ENCODE measurements at regions of chr10 and their contacts with region 1.

Region 1: GRCh38 chr10:102835007-102835482 is 2.2 kb downstream of the CYP17A1 start:
- DNase-seq: peak; percentile 55 to 69
- ATAC-seq: peak; percentile 88 to 90
- H3K4me3 ChIP-seq: no peak overlapping the region
- H3K27ac ChIP-seq: no peak overlapping the region
- H3K4me1 ChIP-seq: peaks cover 4 to 5% of the 10 kb centered on the region in 2 donors
- H3K27me3 ChIP-seq: no peaks in the 10 kb centered on the region
- CTCF ChIP-seq: peak; percentile 72 to 90 (median 82)
- POLR2A ChIP-seq: no peak

Region 2: DNA sequence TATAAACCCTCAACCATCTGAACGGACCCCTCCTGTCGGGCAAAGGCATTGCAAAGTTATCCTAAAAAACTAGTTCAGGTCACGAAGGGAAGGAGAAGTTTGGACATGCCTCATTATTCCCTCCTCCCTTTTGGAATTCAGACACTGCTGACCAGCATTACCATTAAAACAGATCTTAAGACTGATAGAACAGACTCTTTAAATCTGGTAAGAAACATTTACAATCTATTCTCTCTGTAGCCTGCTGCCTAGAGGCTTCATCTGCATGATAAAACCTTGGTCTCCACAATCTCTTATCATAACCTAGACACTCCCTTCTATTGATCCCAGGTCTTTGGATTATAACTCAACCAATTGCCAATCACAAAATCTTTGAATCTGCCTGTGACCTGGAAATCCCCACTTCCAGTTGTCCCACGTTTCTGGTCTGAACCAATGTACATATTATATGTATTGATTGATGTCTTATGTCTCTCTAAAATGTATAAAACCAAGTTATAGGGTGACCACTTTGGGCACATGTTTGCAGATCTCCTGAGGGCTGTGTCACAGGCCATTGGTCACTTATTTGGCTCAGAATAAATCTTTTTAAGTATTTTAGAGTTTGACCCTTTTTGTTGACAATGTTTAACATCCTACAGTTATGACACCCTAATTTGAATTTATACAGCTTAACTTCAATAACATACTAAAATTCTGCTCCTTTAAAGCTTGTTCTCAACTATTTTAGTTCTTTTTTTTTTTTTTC is 59.6 kb after region 1 on chr10:
- in situ Hi-C with region 1: loop called in 1 of 4 experiments (anchors 10 kb)
- intact Hi-C with region 1: no loop called
- DNase-seq: no peak
- ATAC-seq: no peak
- H3K4me3 ChIP-seq: no peak overlapping the region
- H3K27ac ChIP-seq: no peak overlapping the region
- H3K4me1 ChIP-seq: no peaks in the 10 kb centered on the region
- H3K27me3 ChIP-seq: no peaks in the 10 kb centered on the region
- CTCF ChIP-seq: no peak
- POLR2A ChIP-seq: no peak

Region 3: GRCh38 chr10:102904346-102904745 is 69.3 kb after region 1 on chr10:
- in situ Hi-C with region 1: loop called in 2 of 4 experiments (anchors 5 to 10 kb)
- intact Hi-C with region 1: loop called (anchors 2 kb)
- DNase-seq: no peak
- ATAC-seq: no peak
- H3K4me3 ChIP-seq: no peak overlapping the region
- H3K27ac ChIP-seq: no peak overlapping the region
- H3K4me1 ChIP-seq: no peaks in the 10 kb centered on the region
- H3K27me3 ChIP-seq: no peaks in the 10 kb centered on the region
- CTCF ChIP-seq: no peak
- POLR2A ChIP-seq: no peak

Measured in gastrocnemius medialis (tissue), 4 donors.